ENCODE measurements at regions of chr12 and their contacts with region 1.

Region 1: GRCh38 chr12:108562348-108563135 is at the start of gene ISCU:
- DNase-seq: peak; percentile 79 to 97
- H3K4me3 ChIP-seq: peak within 1 kb of the TSS; percentile 96
- H3K27ac ChIP-seq: peak within 1 kb of the TSS; percentile 90 to 95
- H3K4me1 ChIP-seq: peaks cover 7 to 37% of the 10 kb centered on the region in 2 donors
- H3K27me3 ChIP-seq: no peaks in the 10 kb centered on the region
- CTCF ChIP-seq: no peak
- total RNA-seq, gene ISCU: 136 TPM

Region 2: GRCh38 chr12:107760809-107761501 is 801.6 kb before region 1 on chr12 and contains the start of gene PRDM4:
- intact Hi-C with region 1: loop called (anchors 5 kb)
- DNase-seq: peak; percentile 85 to 98
- H3K4me3 ChIP-seq: peak within 1 kb of the TSS; percentile 71 to 92
- H3K27ac ChIP-seq: peak within 1 kb of the TSS; percentile 57 to 65
- H3K4me1 ChIP-seq: peaks cover 0 to 22% of the 10 kb centered on the region in 2 donors
- H3K27me3 ChIP-seq: no peaks in the 10 kb centered on the region
- CTCF ChIP-seq: peak in 1 of 3 experiments; percentile 39
- total RNA-seq, gene PRDM4: 7.3 TPM

Region 3: GRCh38 chr12:108618079-108618952 is 55.8 kb after region 1 on chr12:
- intact Hi-C with region 1: loop called (anchors 1 kb)
- DNase-seq: peak in 1 of 2 donors; percentile 87
- H3K4me3 ChIP-seq: no peak overlapping the region
- H3K27ac ChIP-seq: no peak overlapping the region
- H3K4me1 ChIP-seq: no peaks in the 10 kb centered on the region
- H3K27me3 ChIP-seq: no peaks in the 10 kb centered on the region
- CTCF ChIP-seq: peak; percentile 89 to 99 (median 96)

Region 4: DNA sequence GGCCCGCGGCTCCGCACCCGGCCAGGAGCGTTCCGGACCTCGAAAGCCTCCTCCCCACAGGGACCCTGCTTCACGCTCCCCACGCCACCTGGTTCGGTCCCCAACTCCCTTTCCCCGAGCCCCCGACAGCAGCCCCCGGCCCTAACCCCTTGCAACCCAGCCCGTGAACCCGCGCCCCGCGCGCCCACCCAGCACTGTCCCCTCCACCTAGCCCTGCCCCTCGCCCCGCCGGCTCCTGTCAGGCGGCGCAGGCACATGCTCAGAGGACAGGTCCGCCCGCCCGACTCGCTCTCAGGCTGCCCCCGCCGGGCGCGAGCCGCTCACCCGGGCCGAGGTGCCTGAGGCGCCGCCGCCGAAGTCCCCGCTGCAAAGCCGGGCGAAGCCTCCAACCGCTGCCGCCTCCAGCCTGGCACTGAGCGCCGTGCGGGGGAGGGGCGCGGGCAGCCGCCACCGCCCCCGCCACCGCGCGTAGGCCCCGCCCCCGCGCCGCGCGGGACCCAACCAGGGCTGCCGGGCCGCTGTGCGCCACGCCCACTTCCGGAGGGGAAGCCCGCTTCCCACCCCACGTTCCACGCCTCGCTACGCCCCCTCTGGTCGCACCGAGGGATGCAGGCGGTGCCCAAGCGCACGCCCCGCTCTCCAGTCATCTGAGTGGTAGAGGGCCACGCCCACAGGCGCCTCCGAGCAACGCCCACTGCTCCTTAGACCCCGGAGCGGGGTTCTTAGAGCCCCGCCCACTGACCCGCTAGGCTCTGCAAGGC is 168.7 kb after region 1 on chr12 and contains the start of gene CORO1C:
- intact Hi-C with region 1: loop called (anchors 1 kb)
- DNase-seq: peak; percentile 84 to 98
- H3K4me3 ChIP-seq: peak within 1 kb of the TSS; percentile 66 to 79
- H3K27ac ChIP-seq: peak within 1 kb of the TSS; percentile 94 to 96
- H3K4me1 ChIP-seq: peaks cover 0 to 30% of the 10 kb centered on the region in 2 donors
- H3K27me3 ChIP-seq: no peaks in the 10 kb centered on the region
- CTCF ChIP-seq: peak; percentile 82 to 94 (median 83)
- total RNA-seq, gene CORO1C: 106 TPM

Region 5: GRCh38 chr12:108950991-108951739 is 388.6 kb after region 1 on chr12:
- intact Hi-C with region 1: loop called (anchors 2 kb)
- DNase-seq: peak in 1 of 2 donors; percentile 85
- H3K4me3 ChIP-seq: peak overlapping the region in 1 of 2 donors; percentile 34
- H3K27ac ChIP-seq: no peak overlapping the region
- H3K4me1 ChIP-seq: no peaks in the 10 kb centered on the region
- H3K27me3 ChIP-seq: no peaks in the 10 kb centered on the region
- CTCF ChIP-seq: peak; percentile 76 to 87 (median 87)

Region 6: DNA sequence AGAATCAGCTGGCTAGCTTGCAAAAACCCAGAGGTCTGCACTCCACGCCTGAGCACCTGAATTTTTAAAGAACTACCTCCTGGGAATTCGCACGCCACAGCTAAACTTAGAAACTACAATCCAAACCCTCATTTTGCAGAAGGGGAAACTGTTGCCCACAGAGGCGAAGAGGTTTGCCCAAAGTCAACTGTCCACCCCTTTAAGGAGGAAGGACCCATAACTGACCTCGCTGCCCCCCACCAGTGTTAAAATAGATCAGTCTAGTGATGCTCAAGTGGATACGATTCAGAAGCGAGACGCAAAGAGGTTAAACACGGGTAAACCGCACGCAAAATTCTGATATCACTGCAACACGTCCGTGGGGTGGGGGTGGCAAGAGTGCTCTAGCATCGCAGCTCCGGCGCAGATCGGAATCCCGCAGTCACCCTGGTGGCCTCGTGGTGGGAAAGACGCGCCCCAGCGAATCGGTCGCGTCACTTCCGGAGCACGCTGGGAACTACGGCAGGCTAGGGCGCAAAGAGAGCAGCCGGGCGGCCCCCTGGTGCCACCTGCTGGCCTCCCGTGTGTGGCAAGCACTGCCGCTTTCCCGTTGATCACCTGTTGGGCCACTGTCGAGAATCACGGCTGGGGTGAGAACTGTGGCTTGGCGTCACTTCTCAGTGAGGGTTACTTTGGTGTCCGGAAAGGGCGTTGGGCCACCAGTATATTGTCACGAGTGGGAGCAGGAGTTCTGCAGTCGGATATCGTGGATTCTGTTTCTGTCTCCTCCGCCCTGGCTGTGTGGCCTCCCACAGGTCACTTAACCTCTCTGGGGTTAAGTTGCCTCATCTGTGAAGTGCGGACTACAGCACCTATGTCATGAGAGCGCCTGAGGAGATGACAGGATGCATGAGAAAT is 530.7 kb after region 1 on chr12 and contains the start of gene ALKBH2:
- intact Hi-C with region 1: loop called (anchors 1 kb)
- DNase-seq: peak; percentile 66 to 97
- H3K4me3 ChIP-seq: peak within 1 kb of the TSS; percentile 52 to 66
- H3K27ac ChIP-seq: peak within 1 kb of the TSS; percentile 54 to 58
- H3K4me1 ChIP-seq: peaks cover 8 to 26% of the 10 kb centered on the region in 2 donors
- H3K27me3 ChIP-seq: no peaks in the 10 kb centered on the region
- CTCF ChIP-seq: peak; percentile 93 to 99 (median 97)
- total RNA-seq, gene ALKBH2: 18.6 TPM

Region 7: DNA sequence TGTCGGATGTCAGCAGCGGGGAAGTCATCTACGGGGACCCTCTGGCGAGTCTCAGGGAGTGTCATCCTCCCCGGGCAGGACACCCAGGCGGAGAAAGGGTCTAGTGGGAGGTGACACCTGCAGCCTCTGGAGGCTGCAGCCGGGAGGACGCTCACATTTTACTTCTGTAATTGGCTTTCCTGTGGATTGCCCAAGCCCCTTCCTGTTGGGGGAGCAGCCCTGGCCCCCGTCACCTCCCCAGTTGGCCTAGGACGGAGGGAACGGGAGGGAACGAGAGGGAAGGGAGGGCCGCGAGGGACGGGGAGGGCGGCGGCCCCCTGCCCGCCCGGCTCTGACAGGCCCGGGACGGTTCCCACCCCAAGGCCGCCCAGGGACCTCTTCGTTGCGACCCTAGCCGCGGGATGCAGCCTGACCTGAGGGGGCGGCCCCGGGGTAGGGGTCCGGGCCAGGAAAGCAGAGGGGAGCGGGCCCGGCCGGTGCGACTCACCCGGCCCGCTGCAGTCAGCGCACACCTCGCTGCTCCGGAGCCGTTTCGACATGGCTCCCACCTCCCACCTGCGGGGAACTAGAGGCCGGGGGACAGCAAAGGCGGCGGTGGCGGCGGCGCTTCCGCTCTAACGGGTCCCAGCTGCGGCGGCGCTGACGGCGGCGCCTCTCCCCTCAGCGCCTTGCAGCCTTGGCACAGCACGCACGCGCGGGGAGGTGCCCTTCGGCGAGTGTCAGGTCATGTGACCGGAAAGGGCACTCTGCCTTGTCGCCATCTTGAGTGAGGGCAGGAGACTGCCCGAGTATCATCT is 1433.3 kb after region 1 on chr12 and contains the start of gene GIT2:
- intact Hi-C with region 1: loop called (anchors 5 kb)
- DNase-seq: peak; percentile 79 to 97
- H3K4me3 ChIP-seq: peak within 1 kb of the TSS; percentile 75 to 98
- H3K27ac ChIP-seq: peak within 1 kb of the TSS; percentile 77 to 78
- H3K4me1 ChIP-seq: peaks cover 7 to 13% of the 10 kb centered on the region in 2 donors
- H3K27me3 ChIP-seq: no peaks in the 10 kb centered on the region
- CTCF ChIP-seq: no peak
- total RNA-seq, gene GIT2: 44.9 TPM

Measured in ascending aorta (tissue), 2 donors.